GM13976 (cell line): ENCODE measurements at regions of chr1 and their contacts with region 1.

Region 1: DNA sequence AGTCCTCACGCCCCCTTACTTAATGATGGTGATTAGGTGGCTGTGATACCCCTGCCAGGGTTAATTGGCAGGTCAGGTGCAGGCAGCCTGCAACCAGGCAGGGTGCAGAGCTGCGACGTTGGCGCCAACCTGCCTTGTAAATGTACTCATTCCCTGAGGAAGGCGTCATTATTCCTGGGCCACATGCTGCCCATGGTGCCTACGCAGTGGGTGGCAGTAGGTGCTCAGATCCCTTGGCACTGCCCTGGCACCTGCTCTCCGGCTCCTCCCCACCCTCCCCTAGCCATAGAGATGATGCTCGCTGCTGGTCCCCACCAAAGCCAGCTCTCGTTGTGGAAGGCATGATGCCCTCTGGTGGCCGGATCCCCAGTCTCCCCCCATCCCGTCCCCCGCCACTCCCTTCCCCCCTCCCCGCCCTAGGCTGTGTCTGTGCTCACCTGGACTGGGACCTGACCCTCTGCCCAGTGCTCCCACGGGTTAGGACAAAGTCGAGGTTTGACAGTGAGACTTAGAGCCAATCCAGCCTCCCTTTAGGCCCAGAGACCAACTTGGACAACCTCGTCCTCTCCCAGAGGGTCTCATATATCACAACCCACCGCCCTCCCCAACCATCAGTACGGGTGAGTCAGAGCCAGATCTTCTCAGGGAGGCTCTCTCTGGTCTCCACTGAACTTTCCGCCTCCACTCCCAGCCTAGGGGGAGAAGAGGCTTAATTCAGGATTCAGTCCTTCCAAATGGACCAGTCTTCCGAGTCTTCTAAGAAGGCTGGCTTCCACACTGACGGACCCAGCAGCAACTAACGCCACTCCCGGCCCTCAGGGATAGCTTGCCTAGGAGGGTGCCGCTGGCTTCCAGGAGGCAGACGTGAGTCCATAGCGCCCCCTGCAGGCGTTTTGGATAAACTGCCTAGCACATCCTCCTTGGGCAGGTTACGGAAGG is 5.7 kb downstream of the KRTCAP2 start:
- DNase-seq: peak; percentile 85
- CTCF ChIP-seq: peak; percentile 91

Region 2: DNA sequence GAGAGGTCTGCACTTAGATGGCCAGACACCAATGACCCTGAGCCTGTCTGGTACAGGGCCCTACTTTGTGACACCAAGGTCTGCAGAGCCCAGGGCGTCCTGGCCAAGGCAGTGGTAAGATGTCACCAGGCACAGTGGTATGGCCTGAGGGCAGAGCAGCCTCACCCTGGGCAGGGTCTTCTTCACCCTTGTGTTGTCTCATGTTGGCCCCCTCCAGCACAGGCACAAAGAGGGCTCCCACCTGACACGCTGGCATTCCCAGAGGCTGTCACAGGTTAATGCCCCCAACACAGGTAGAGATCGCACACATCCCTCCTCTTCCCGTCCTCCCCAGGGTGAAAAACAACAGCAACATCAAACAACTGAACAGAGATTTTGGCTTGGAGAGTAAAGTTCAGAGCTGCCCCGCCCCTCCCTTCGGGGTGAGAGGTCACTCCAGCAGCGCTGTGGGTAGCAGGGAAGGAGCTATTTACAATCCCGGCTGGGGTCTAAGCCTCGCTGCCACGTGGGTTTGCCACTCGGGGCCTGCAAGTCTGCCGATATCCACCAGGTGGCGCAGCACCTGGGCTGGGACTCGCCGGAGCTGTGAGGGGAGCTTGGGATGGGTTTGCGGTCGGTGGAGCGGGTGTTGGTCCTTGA is 76.2 kb before region 1 on chr1:
- in situ Hi-C with region 1: loop called (anchors 5 kb)
- DNase-seq: peak; percentile 88
- CTCF ChIP-seq: peak; percentile 95

Region 3: DNA sequence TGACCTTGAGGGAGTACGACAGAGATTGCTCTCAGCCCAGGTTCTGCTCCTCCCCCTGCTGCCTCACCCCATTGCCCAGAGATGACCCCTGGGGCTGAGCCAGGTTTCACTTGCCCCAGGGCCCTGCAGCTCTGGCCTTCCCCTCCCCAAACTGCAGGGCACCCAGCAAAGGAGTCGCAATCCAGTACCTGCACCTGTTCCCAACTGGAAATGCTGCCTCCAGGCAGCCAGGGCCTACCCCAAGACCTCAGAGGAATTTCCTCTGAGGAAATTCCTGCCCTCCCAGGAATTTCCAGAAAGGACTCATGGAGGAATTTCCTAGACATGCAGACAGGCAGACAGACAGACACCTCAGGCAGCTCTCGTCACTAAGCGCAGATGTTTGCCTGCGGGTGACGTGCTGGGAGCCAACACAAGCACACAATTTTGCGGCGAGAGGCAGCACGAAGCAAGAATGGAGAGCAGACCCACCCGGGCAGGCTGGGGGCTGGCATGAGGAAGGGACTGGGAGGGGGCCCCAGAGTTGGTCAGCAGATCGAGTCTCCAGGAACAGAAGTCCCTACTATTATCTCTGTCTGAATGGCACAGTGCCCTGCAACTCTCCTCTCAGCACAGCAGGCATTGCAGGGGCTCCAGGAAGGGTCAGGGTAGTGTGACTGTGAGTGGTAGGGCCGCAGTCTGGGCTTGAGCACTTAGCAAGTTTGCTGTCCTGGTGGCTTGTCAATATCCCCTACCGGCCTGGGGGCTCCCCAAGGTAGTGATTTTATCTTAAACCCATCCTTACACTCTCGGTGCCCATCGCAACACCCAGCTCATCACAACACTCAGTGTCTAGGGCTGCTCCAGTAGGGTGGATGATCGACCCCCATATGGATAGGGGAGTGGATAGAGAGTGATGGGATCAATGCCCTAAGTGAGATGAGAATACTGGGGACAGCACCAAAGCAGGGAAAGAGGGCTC is 42.7 kb before region 1 on chr1:
- in situ Hi-C with region 1: no loop called
- DNase-seq: no peak
- CTCF ChIP-seq: no peak

Region 4: DNA sequence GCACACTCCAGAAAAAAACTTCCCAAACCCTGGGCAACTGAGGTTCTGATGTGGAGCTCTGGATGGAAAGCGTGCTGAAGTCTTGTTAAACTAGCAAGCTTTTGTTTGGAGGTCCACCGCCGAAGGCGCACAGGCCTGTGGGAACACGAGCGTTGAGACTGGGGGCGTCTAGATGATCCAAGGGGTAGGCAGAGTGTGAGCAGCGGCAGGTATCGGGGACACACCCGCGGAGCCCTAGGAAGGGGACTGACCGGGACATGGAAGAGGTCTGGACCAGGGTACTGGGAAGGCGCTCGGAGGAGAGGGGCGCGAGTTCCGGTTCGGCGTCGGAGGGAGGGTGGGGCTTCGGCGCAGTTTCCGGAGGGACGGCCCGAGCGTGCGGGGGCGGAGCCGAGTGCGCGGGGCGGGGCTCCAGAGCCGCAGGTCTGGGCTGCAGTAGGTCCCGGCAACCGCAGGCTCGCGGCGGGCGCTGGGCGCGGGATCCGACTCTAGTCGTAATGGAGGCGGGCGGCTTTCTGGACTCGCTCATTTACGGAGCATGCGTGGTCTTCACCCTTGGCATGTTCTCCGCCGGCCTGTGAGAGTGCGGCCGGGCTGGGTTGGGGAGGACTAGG is 31.9 kb before region 1 on chr1 and contains the start of gene SLC50A1:
- in situ Hi-C with region 1: no loop called
- DNase-seq: peak; percentile 97
- CTCF ChIP-seq: no peak